ENCODE measurements at regions of chr7 and their contacts with region 1.

Region 1: GRCh38 chr7:135211179-135211945 is at the start of gene WDR91:
- DNase-seq: peak; percentile 93
- H3K4me3 ChIP-seq: peak within 1 kb of the TSS; percentile 89 to 90 (median 89)
- H3K4me3 Mint-ChIP-seq: peak within 1 kb of the TSS; percentile 94 to 98
- H3K27ac ChIP-seq: peak within 1 kb of the TSS; percentile 57 to 94
- H3K27ac Mint-ChIP-seq: peak within 1 kb of the TSS; percentile 91 to 99 (median 98)
- H3K4me1 ChIP-seq: peaks cover 44% of the 10 kb centered on the region in 2 donors
- H3K4me1 Mint-ChIP-seq: peaks cover 44% of the 10 kb centered on the region
- H3K27me3 ChIP-seq: no peaks in the 10 kb centered on the region
- H3K27me3 Mint-ChIP-seq: peaks cover 1 to 9% (median 2%) of the 10 kb centered on the region in 3 donors
- CTCF ChIP-seq: no peak
- polyA plus RNA-seq, gene WDR91: 2.5 to 35.0 (median 3.9) TPM

Region 2: DNA sequence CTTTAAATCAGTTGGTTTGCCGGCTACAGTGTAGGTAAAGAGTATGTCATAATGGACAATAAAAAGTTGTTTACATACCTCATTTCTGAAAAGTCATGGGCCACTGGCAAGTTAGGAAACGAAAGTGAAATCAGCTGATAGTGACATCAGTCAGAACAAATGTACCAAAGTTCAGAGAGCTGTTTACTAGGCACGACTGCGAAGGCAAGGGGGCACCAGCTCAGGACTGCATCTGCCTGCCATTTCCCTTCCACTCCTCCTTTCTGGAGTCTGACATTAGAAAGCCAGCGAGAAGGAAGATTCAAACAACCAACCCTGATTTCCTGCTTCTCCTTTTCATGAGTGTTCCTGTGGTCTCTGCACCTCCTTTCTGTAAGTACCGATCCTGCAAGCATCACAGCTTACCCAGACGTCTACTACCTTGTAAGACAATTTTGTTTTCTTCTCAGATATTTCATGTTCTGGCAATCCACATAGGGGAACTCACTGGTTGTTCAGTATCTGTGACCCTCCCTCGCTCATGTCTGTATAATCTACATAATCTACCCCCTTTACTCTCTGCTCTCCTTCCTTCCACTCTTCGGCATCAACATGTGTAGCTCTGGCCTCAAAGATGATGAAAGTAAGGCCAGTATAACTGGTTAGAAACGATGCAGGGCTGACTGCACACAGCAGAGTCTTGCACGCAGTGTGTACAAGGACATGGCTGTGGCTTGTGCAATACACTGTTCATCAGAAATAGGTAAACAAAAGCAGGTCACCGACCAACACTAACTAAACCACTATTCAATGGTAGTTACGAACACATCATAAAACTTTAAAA is 63.3 kb before region 1 on chr7 and contains the start of gene TMEM140:
- intact Hi-C with region 1: loop called (anchors 5 kb)
- DNase-seq: peak; percentile 57 to 63 (median 61)
- H3K4me3 ChIP-seq: peak within 1 kb of the TSS; percentile 68 to 98 (median 81)
- H3K4me3 Mint-ChIP-seq: peak within 1 kb of the TSS; percentile 96
- H3K27ac ChIP-seq: peak within 1 kb of the TSS; percentile 89 to 99
- H3K27ac Mint-ChIP-seq: peak within 1 kb of the TSS; percentile 93 to 99 (median 96)
- H3K4me1 ChIP-seq: peaks cover 52 to 60% of the 10 kb centered on the region in 2 donors
- H3K4me1 Mint-ChIP-seq: peaks cover 61% of the 10 kb centered on the region
- H3K27me3 ChIP-seq: no peaks in the 10 kb centered on the region
- H3K27me3 Mint-ChIP-seq: peaks cover 0 to 2% (median 0%) of the 10 kb centered on the region in 3 donors
- CTCF ChIP-seq: no peak
- polyA plus RNA-seq, gene TMEM140: 2.9 to 14.7 (median 10.6) TPM